B cell (primary cell): ENCODE measurements at regions of chr1 and their contacts with region 1.

Region 1: GRCh38 chr1:156945881-156946661 is 25.6 kb downstream of the LRRC71 start:
- DNase-seq: no peak
- ATAC-seq: no peak
- H3K4me3 ChIP-seq: no peak overlapping the region
- H3K4me3 Mint-ChIP-seq: no peak overlapping the region
- H3K27ac ChIP-seq: no peak overlapping the region
- H3K27ac Mint-ChIP-seq: no peak overlapping the region
- H3K4me1 ChIP-seq: no peaks in the 10 kb centered on the region
- H3K4me1 Mint-ChIP-seq: no peaks in the 10 kb centered on the region
- H3K27me3 ChIP-seq: no peaks in the 10 kb centered on the region
- H3K27me3 Mint-ChIP-seq: peaks cover 4% of the 10 kb centered on the region
- CTCF ChIP-seq: no peak

Region 2: GRCh38 chr1:156961709-156962108 is 15.6 kb after region 1 on chr1:
- CTCF ChIA-PET with region 1: no interaction called
- POLR2A ChIA-PET with region 1: no interaction called
- intact Hi-C with region 1: loop called (anchors 2 kb)
- DNase-seq: peak; percentile 23
- ATAC-seq: no peak
- H3K4me3 ChIP-seq: no peak overlapping the region
- H3K4me3 Mint-ChIP-seq: no peak overlapping the region
- H3K27ac ChIP-seq: no peak overlapping the region
- H3K27ac Mint-ChIP-seq: no peak overlapping the region
- H3K4me1 ChIP-seq: peaks cover 16 to 19% of the 10 kb centered on the region in 2 donors
- H3K4me1 Mint-ChIP-seq: peaks cover 27% of the 10 kb centered on the region
- H3K27me3 ChIP-seq: peaks cover 0 to 6% (median 0%) of the 10 kb centered on the region in 4 experiments
- H3K27me3 Mint-ChIP-seq: no peaks in the 10 kb centered on the region
- CTCF ChIP-seq: peak; percentile 33